Common myeloid progenitor, CD34-positive (primary cell): ENCODE measurements at regions of chr10 and their contacts with region 1.

Region 1: DNA sequence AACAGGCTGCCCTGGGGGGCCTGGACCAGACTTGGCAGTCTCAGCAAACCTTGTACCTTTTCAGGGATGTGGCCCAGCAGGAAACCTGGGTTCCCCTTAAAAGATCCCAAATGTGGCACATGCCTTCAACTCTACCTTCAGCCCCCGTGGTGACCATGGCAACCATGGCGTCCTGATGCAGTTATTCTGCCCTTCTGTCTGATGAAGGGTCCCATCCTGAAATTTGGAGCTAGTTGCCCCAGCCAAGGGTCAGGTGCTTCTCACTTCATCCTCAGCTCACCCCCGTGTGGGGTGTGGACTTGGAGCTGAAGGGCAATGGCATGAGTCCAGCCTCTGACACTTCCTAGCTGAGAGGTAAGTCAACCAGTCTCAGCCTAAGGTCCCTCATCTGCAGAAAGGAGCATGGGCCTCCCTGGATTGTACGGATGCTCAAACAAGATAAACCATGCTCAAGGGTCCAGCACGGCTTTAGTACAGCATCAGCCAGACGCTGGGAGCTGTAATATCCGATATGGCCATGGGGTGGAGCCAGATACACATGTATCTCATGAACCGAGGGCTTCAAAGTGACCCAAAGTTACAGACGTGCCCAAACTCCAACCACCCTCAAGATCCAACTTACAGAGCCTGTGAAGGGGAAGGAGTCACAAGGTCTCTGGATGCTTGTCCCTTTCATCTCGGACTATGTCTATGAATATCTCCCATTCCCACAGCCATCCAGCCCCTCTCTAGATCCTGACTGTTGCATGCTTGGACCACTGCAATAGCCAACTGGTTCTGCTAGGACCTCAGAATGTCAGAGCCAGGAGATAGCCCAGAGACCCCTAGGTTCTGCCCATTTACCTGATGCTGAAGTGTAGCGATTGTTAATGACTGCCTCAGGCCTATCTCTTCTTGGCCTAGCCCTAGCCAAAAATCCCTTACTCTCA is 142.5 kb downstream of the SH3PXD2A start:
- DNase-seq: peak; percentile 75 to 90 (median 82)
- H3K4me3 ChIP-seq: no peak overlapping the region
- H3K27ac ChIP-seq: no peak overlapping the region
- H3K4me1 ChIP-seq: no peaks in the 10 kb centered on the region
- H3K27me3 ChIP-seq: no peaks in the 10 kb centered on the region

Region 2: DNA sequence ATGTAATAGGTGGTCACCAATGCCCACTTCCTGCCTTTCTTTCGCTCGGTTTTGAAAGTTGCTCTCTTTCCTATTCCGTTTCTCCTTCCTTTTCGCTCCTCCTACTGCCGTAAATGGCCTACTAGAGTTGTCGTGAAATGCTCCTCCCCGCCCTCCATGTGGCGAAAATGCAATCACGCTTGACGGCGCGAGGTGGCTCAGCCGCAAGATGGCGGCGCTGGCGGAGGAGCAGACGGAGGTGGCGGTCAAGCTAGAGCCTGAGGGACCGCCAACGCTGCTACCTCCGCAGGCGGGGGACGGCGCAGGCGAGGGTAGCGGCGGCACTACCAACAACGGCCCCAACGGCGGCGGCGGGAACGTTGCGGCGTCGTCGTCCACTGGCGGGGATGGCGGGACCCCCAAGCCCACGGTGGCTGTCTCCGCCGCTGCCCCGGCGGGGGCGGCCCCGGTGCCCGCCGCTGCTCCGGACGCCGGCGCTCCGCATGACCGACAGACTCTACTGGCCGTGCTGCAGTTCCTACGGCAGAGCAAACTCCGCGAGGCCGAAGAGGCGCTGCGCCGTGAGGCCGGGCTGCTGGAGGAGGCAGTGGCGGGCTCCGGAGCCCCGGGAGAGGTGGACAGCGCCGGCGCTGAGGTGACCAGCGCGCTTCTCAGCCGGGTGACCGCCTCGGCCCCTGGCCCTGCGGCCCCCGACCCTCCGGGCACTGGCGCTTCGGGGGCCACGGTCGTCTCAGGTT is 344.9 kb before region 1 on chr10 and contains the start of gene TAF5:
- CTCF ChIA-PET with region 1: no interaction called
- POLR2A ChIA-PET with region 1: no interaction called
- DNase-seq: peak; percentile 96 to 97 (median 97)
- H3K4me3 ChIP-seq: peak within 1 kb of the TSS; percentile 55 to 98 (median 87)
- H3K27ac ChIP-seq: peak within 1 kb of the TSS; percentile 40 to 73
- H3K4me1 ChIP-seq: peaks cover 2 to 19% (median 7%) of the 10 kb centered on the region in 4 experiments
- H3K27me3 ChIP-seq: no peaks in the 10 kb centered on the region

Region 3: DNA sequence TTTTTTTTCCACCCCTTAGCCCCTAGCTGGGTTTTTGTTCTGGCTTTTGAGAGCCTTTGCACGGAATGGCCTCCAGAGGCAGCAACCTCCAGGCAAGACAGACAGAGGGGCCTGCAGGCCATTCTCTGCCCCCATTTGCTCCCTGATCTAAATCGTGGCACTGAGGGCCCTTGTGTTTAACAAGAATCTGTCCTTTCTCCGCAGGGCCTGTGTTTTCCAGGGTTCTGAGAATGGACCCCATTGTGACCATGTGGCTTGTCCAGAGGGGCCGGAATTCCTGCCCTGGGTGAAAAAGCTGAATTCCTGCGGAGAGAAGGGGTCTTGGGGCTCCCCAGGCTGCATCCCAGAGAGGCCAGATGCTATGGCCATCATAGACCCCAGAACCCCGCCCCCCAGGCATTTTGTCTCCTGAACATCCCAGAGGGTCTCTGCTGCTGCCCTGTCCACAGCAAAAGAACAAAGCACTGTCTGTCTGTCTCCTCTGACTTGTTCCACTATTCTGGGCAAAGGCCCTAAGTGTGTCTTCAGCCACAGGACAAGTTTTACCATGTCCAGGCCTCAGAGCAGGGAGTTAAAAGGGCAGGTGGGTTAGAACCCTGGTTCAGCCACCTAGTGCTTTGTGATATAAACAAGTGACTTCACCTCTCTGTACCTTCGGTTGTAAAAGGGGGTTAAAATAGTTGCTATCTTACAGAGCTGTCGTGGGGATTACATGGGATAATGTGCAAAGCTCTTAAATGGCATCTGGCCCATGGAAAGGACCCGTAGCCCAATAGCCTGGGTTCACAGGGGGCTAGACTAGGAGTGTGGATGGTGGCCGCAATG is 13.0 kb before region 1 on chr10:
- CTCF ChIA-PET with region 1: interaction called, 22 read pairs
- POLR2A ChIA-PET with region 1: no interaction called
- DNase-seq: no peak
- H3K4me3 ChIP-seq: no peak overlapping the region
- H3K27ac ChIP-seq: no peak overlapping the region
- H3K4me1 ChIP-seq: peaks cover 0 to 16% (median 9%) of the 10 kb centered on the region in 4 experiments
- H3K27me3 ChIP-seq: peaks cover 0 to 3% (median 0%) of the 10 kb centered on the region in 5 experiments

Region 4: DNA sequence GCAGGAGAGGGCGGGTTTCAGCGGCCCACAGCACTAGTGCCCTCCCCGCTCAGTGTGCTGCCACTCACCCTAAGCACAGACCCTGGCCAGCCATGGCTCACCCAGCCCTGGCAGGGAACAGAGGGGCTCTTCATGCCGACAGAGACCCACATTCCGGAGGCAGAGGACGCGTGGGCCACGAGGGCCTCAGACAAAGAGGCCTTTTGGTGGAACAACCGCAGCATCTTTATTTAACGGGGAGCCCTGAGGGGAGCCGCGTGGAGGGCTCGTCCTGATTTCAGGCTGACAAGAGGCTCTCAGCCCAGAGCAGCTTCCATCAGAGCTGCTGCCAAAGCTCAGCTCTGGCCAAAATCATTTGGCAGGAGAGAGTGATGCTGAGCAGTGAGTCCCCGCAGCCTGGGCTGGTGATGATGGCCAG is 14.7 kb after region 1 on chr10:
- CTCF ChIA-PET with region 1: interaction called, 20 read pairs
- POLR2A ChIA-PET with region 1: no interaction called
- DNase-seq: no peak
- H3K4me3 ChIP-seq: no peak overlapping the region
- H3K27ac ChIP-seq: no peak overlapping the region
- H3K4me1 ChIP-seq: no peaks in the 10 kb centered on the region
- H3K27me3 ChIP-seq: no peaks in the 10 kb centered on the region

Region 5: DNA sequence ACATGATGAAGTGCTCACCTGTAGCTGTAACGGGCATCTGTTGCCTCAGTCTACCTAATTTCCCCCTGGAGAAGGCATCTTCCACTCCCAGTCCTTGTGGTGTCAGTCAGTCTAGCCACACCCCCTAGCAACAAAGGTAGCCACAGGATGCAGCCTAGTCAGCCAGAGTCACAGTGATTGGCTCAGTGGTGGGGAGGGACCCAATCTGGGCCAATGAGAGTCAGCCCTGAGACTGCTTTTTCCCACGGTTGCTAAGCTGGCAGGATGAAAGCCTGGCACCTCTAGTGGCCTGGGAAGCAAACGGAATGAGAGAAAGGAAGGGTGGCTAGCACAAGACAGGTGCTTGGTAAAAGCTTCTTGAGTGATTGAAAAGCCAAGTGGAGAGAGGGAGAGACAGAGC is 23.9 kb after region 1 on chr10:
- CTCF ChIA-PET with region 1: interaction called, 20 read pairs
- POLR2A ChIA-PET with region 1: no interaction called
- DNase-seq: peak in 1 of 3 donors; percentile 9
- H3K4me3 ChIP-seq: no peak overlapping the region
- H3K27ac ChIP-seq: no peak overlapping the region
- H3K4me1 ChIP-seq: peaks cover 0 to 6% (median 5%) of the 10 kb centered on the region in 4 experiments
- H3K27me3 ChIP-seq: no peaks in the 10 kb centered on the region

Region 6: DNA sequence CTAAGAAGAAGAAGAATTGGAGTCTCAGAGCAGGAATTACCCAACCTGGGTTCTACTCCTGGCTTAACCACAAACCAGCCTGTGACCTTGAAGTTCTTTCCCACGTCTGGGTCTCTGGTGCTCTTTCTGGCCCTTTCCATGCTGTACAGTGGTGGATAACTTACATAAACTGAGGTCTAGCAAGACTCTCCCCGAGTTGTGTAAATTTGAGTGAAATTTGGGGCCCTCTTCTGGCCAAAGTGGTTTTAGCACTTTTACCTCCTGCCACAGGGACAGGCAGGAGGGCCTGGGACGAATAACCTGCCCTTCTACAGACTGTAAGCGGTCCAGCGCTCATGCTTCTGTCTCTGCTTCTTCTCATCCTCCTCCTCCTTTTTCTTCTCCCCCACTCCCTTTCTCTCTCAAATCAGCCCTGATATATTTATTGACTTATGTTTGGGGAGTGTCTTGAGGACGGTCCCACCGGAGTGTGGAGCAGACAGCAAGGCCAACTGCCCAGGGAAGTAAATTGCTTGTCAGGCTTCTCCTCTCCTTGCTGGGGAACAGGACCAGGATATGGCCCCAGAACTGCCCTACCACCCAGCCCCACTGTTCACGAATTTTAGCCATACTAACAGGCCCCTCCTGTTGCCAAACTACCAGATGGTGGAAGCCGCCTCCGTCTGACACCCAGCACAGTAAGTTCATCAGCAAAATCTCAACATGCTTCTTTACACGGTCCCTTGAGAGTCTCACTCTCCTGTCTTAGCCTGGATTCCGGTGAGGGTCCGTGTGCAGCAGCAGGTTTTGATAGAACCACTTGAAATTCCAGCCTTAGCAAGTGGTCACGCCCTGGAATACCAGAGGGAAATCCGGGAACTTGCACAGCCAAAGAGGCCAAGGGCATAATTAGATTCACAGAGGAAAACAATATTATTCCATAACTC is 146.6 kb after region 1 on chr10:
- CTCF ChIA-PET with region 1: interaction called, 67 read pairs
- POLR2A ChIA-PET with region 1: no interaction called
- DNase-seq: peak; percentile 56 to 77 (median 65)
- H3K4me3 ChIP-seq: no peak overlapping the region
- H3K27ac ChIP-seq: no peak overlapping the region
- H3K4me1 ChIP-seq: peaks cover 0 to 20% (median 13%) of the 10 kb centered on the region in 4 experiments
- H3K27me3 ChIP-seq: peaks cover 0 to 18% (median 0%) of the 10 kb centered on the region in 5 experiments

Region 7: GRCh38 chr10:103872137-103872931 is 159.5 kb after region 1 on chr10:
- CTCF ChIA-PET with region 1: interaction called, 13 read pairs
- POLR2A ChIA-PET with region 1: no interaction called
- DNase-seq: no peak
- H3K4me3 ChIP-seq: no peak overlapping the region
- H3K27ac ChIP-seq: no peak overlapping the region
- H3K4me1 ChIP-seq: no peaks in the 10 kb centered on the region
- H3K27me3 ChIP-seq: no peaks in the 10 kb centered on the region